Posterior vena cava (tissue), 2 donors: ENCODE measurements at regions of chr1 and their contacts with region 1.

Region 1: DNA sequence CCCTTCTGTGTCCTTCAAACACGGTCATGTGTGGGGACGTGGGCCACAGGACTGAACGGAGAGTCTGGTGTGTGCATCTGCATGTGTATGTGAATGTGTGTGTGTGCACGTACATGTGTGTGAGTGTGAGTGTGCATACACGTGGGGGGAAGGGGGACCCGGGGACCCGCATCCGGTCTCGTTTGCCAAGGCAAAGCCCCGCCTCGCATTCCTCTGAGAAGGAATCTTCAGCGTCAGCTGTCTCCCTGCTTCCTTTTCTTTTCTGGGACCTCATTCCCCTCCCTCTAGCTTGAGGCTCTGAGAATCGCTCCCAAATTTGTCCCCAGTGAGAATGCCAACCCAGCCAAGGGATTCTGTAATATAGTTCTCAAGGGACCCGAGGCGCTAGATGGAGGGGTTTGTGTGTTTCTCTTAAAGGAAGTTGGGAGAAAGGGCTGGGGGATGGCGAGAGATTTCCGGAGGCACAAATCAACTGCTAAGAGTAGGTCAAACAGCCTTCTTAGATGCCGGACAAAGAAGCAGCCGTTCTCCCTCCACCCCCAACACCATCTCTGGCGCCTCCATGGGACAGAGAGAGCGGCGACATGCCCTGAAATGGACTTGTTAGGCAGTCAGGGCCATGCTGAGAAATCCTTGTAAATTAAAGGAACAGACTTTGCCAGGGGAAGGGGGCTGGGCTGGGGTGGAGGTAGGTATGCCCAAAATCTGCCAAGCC is 6.6 kb downstream of the IFFO2 start:
- DNase-seq: no peak

Region 2: DNA sequence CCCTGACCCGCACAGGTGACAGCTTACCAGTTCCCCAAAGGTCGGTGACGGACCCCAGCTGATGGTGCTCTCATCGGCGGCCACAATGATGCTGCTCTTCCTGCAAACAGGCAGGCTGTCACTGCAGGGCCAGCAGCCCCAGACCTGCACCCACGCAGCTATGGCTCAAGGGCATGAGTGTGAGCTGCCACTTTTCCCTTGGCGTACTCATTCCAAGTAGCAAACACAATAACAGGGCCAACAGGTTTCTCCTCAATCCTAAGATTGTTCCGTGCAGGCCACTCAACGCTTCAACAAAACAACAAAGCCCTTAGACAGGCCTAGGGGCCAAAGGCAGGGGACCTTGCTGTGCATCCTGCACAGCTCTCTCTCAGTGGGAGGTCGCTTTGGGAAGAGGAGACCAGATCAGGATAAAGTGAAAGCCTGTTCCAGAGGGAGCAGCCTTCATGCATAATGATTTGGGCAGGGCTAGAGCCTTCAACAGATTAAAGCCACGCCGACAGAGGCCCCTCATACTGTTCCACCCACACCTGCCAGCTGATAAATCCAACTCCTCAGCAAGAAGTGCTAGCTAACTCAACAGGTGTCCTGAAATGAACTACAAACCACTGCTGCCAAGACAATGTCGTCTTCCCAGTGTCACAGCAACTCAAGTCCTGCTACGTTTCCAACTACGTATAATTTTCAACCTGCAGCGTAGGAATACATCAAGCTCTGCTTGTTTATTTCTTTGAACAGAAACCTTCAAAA is 1537.6 kb before region 1 on chr1:
- intact Hi-C with region 1: loop called in 1 of 2 experiments (anchors 5 kb)
- DNase-seq: no peak

Region 3: DNA sequence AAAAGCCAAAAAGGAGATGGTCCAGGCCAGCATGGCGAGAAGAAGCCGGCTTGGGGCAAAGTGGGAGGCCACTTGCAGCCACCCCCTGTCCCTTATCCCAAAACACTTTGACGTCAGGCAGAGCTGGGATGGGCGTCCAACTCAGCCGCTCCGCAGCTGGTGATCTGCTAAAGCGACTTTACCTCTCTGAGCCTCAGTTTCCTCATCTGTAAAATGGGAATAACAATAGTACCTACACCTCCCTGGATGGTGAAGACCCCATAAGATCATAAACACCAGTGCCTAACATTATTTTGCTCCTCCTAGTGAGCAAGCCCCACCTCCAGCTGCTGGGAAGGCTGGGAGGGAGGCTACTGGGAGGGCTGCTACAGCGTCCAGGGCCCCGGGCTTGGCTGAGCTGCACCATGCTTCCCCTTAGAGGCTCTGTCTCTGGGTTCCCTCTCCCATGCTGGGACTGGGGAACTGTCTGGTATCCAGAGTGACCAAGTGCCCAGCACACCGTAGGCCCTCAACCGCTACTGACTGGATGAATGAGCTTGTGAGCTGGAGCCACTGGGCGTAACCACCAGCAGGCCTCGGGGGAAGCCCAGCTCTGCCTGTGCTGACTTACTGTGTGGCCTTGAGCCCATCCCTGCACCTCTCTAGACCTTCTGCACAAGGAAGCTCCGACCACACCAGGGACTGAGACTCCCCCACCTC is 11.7 kb before region 1 on chr1:
- intact Hi-C with region 1: no loop called
- DNase-seq: no peak